Cardiac septum (tissue), 1 donor: ENCODE measurements at regions of chr3 and their contacts with region 1.

Region 1: DNA sequence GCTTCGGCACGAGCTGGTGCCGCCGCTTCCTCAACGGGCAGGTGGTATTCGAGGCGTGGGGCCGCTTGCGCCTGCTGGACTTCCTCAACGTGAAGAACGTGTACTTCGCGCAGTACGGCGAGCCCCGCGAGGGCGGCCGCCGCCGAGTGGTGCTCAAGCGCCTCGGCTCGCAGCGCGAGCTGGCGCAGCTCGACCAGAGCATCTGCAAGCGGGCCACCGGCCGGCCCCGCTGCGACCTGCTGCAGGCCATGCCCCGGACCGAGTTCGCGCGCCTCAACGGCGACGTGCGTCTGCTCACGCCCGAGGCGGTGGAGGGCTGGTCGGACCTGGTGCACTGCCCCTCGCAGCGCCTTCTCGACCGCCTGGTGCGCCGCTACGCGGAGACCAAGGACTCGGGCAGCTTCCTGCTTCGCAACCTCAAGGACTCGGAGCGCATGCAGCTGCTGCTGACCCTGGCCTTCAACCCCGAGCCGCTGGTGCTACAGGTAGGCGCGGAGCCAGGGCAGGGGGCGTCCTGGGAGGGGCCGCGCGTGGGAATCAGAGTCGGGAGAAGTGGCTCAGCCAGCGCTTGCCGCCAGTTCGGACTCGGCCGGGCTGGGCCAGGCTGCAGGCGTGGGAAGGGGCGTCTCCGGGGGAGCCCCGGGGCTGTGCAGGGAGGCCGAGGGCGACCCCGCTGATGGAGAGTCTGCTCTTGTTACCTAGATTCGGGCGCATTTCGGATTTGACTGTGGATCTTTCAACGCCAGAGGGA is 1.1 kb downstream of the DIPK2A start:
- DNase-seq: peak; percentile 91

Region 2: DNA sequence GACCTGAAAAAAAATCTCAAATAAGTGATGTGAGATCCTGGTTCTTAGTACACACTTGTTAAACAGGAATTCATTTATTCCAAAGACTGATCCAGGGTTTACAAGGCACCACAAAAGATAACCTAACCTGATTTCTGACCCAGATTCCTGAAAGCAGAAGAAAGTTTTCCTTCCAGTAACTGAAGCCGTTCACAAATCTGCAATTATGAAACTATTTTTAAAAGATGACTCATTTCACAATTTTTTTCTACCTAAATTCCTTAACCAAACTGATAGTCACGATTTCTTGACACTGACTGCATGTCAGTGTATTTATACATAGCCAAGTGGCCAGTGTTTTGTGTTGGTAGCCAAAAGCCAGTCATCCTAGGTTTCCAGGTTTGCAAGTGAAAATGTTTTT is 141.5 kb before region 1 on chr3:
- intact Hi-C with region 1: no loop called
- DNase-seq: no peak

Region 3: DNA sequence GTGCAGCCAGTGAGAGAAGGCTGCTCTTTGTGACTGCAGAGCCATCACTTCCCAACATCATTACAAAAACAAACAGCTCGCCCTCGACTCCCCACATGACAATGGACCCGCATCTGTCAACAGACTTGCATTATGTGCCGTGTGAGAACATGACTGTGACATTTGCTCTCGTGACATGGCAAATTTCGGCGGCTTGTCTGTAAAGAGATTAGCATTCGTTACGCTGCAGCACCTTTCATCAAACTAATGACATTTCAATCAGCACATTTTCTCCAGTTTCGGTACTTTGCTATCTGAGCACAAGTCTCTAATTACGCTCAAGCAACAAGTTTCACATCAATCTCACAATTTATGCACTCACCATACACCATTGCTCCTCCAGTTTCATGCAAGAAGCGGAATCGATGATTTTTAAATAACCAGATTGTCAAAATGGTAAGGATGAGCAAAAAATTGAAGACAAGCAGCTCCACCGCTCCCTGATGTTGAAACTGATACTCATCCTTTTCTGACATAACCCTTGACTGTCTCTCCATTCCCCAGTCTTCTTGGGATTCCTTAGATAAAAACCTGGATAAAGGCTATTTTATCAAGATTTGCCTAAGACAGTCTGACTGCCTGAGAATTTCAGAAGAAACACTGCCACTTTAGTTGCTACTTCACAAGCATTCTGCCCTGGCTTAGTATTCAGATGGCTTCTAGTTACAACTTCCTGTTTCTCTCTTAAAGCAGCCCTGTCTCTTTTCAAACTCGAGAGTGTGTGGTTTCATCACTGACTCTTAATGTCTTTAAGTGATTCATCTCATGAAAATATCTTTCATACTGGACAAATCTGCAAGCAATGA is 124.7 kb before region 1 on chr3 and contains the start of gene SLC9A9:
- intact Hi-C with region 1: no loop called
- DNase-seq: peak; percentile 74
- total RNA-seq, gene SLC9A9: 3.6 TPM

Region 4: DNA sequence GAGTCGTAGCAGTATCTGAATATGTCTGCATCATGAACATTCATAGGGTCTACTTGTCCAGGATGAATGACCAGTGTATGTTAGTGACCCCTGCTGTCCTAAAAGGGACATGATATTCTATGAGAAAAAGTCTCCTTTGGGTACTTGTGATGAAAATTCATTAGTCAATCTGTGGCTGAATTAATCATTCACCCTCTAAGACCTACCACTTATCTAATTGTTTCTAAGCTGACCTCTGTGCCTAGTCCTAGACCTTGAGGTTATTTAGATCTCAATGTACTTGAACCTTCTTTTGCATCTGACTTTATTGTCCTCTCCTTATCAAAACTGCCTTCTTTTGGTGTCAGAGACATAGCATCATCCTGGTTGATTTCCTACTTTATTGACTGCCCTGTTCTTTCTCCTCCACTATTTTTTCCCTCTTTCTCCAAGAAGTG is 798.3 kb after region 1 on chr3:
- intact Hi-C with region 1: loop called (anchors 10 kb)
- DNase-seq: no peak